Psoas muscle (tissue), 8 donors: ENCODE measurements at regions of chr14 and their contacts with region 1.

Region 1: DNA sequence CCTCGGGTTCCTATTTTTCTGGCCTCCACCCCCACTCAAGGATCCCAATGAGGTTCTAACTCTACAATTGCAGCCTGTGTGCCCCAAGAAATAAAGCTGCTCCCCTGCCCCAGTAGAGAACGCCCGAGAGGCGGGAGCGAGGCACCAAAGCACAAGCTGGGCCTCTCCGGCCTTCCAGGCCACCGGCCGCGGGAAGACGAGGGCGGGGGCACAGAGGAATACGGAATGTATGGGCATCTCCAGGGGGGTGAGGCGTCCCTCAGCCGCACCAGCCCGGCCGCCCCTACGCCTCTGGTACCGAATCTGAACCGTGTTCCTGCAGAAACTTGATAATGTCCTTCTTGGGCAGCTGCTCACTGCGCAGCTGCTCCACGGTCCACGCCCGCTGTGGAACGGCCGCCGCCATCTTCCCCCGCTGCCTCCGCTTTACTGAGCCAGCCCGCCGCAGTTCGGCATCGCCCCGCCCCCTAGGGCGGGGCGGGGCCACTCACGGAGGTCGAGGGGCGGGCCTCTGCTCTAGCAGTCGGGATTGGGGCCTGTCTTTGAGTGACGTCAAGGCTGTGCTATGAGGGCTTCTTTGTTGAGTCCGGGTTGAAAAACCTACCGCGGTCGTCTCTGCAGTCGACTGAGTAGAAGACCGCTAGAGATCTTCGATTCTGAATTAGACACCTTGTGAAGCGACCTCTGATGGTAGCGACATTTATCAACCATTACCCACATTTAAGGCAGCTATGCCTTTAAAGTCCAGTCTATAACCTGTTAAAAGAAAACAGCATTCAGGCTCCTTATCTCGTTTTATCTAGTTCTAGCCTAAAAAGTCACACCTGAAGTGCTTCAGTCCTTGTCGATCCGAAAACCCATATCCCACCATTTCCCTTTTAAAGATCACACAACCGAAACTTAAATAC is at the start of gene FKBP3:
- DNase-seq: peak; percentile 96 to 97
- ATAC-seq: peak; percentile 93 to 98 (median 96)
- H3K4me3 ChIP-seq: peak within 1 kb of the TSS; percentile 86
- H3K27ac ChIP-seq: peak within 1 kb of the TSS; percentile 92
- H3K4me1 ChIP-seq: peaks cover 52% of the 10 kb centered on the region
- H3K27me3 ChIP-seq: no peaks in the 10 kb centered on the region
- CTCF ChIP-seq: peak; percentile 15
- total RNA-seq, gene FKBP3: 169 to 202 (median 185) TPM

Region 2: DNA sequence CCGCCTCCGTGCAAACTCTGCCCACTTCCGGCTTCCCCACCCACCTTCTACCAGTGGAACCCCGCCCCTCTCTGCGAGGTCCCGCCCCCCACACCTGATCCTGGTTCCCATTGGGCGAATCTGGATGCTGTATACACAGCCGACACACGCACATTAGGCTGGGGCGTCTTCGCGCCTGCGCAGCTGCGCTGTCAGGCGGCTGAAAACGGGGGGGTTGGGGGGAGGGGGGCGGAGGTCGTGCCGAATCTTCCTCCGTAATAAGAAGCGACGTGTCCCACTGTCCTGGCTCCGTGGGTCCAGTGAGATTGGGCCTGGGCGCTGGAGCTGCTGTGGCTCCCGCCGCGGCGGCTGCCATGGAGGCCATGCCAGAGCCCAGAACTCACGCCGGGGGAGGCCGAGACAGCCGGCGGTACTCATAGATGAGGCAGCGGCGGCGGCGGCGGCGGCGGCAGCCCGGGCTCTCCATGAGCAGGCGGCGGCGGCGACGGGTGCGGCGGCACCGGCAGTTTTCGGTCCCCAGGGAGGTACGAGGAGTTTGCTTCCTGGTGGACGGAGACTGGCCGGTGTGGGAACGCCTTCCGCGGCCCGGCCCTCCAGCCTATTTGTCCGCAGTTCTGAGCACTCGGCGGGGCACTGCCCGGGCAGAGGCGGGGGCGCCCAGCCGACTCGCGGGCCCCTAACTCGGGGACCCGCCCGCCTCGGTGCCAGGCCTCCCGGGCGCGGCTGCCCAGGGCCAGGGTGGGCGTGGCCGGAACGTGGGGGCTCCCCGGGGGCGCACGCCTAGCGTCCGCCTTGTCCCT is 237.1 kb before region 1 on chr14:
- intact Hi-C with region 1: loop called in 1 of 2 experiments (anchors 5 kb)
- DNase-seq: peak; percentile 98
- ATAC-seq: peak; percentile 98 to 100 (median 99)
- H3K4me3 ChIP-seq: peak overlapping the region; percentile 95
- H3K27ac ChIP-seq: peak overlapping the region; percentile 99
- H3K4me1 ChIP-seq: peaks cover 16% of the 10 kb centered on the region
- H3K27me3 ChIP-seq: no peaks in the 10 kb centered on the region
- CTCF ChIP-seq: no peak

Region 3: GRCh38 chr14:44912041-44912869 is 222.1 kb before region 1 on chr14:
- intact Hi-C with region 1: loop called in 1 of 2 experiments (anchors 5 kb)
- DNase-seq: peak in 1 of 2 donors; percentile 15
- ATAC-seq: peak in 3 of 4 donors; percentile 37 to 56 (median 54)
- H3K4me3 ChIP-seq: peak overlapping the region; percentile 62
- H3K27ac ChIP-seq: no peak overlapping the region
- H3K4me1 ChIP-seq: no peaks in the 10 kb centered on the region
- H3K27me3 ChIP-seq: peaks cover 0 to 20% (median 11%) of the 10 kb centered on the region in 3 donors
- CTCF ChIP-seq: no peak

Region 4: DNA sequence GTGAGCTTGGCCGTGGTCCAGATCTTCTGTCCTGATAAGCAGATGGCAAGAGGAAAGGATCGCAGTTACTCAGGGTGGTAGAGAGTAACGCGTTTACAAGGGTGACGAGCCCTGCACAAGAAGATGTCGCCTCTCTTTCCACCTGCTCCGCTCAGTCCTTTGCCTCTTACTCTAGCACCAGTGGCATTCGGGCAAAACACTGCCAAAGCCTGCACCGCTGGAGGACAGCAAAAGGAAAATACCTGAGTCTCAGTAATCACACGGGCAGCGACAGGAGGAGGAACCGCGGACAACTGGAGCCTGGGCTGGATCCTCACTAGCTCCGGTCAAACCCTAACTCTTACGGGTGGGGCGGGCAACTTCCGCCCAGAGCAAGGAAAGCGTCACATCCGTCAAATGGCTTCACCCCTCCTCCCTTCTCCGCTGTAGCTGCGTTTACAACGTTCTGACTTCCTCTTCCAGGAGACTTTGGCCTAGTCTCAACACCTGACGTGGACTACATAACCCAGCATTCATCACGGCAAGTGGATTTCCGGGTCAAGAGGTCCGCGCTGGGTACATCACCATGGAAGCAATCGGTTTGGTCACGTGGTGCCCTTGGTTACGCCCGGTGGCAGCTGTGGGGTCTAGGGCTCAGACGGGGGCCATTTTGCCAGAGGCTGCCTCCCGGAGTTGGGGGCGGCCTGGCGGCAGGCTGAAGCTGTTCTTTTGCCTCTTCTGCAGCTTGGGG is 172.5 kb before region 1 on chr14 and contains the starts of genes KLHL28 and TOGARAM1:
- intact Hi-C with region 1: loop called (anchors 2 kb)
- DNase-seq: peak; percentile 95 to 97
- ATAC-seq: peak; percentile 91 to 98 (median 96)
- H3K4me3 ChIP-seq: peak within 1 kb of the TSS; percentile 89
- H3K27ac ChIP-seq: peak within 1 kb of the TSS; percentile 90
- H3K4me1 ChIP-seq: peaks cover 63% of the 10 kb centered on the region
- H3K27me3 ChIP-seq: no peaks in the 10 kb centered on the region
- CTCF ChIP-seq: no peak
- total RNA-seq, gene KLHL28: 10.4 to 15.5 (median 13.0) TPM
- total RNA-seq, gene TOGARAM1: 9.1 to 16.0 (median 11.5) TPM

Region 5: GRCh38 chr14:45089813-45090212 is 44.5 kb before region 1 on chr14:
- intact Hi-C with region 1: loop called in 1 of 2 experiments (anchors 5 kb)
- DNase-seq: no peak
- ATAC-seq: peak in 2 of 4 donors; percentile 43 to 66
- H3K4me3 ChIP-seq: no peak overlapping the region
- H3K27ac ChIP-seq: no peak overlapping the region
- H3K4me1 ChIP-seq: peaks cover 39% of the 10 kb centered on the region
- H3K27me3 ChIP-seq: no peaks in the 10 kb centered on the region
- CTCF ChIP-seq: no peak

Region 6: DNA sequence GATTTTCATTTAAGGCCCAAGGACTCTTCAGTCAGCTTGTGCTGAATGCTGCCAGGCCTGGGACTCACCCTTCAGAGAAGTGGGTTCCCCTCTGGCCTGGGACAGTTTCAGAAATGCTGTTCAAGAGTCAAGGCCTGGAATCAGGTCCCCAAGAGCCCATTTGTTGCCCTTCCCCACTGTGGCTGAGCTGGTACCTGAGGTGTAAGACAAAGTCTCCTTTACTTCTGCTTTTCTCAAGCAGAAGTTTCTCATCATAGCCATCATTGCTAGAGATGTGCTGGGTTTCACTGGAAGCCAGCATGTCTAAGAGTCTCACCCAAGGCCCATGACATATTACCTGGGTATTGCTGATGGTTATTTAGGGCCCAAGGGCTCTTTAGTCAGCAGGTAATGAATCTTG is 10.4 kb after region 1 on chr14:
- intact Hi-C with region 1: no loop called
- DNase-seq: no peak
- ATAC-seq: no peak
- H3K4me3 ChIP-seq: no peak overlapping the region
- H3K27ac ChIP-seq: no peak overlapping the region
- H3K4me1 ChIP-seq: no peaks in the 10 kb centered on the region
- H3K27me3 ChIP-seq: no peaks in the 10 kb centered on the region
- CTCF ChIP-seq: no peak

Region 7: GRCh38 chr14:45253068-45253753 is 118.9 kb after region 1 on chr14 and contains the start of gene MIS18BP1:
- intact Hi-C with region 1: loop called in 1 of 2 experiments (anchors 1 kb)
- DNase-seq: peak; percentile 96
- ATAC-seq: peak; percentile 96 to 97 (median 97)
- H3K4me3 ChIP-seq: peak within 1 kb of the TSS; percentile 87
- H3K27ac ChIP-seq: peak within 1 kb of the TSS; percentile 87
- H3K4me1 ChIP-seq: peaks cover 11% of the 10 kb centered on the region
- H3K27me3 ChIP-seq: no peaks in the 10 kb centered on the region
- CTCF ChIP-seq: peak; percentile 60
- total RNA-seq, gene MIS18BP1: 2.0 to 5.1 (median 3.2) TPM